ENCODE measurements at regions of chr19 and their contacts with region 1.

Region 1: DNA sequence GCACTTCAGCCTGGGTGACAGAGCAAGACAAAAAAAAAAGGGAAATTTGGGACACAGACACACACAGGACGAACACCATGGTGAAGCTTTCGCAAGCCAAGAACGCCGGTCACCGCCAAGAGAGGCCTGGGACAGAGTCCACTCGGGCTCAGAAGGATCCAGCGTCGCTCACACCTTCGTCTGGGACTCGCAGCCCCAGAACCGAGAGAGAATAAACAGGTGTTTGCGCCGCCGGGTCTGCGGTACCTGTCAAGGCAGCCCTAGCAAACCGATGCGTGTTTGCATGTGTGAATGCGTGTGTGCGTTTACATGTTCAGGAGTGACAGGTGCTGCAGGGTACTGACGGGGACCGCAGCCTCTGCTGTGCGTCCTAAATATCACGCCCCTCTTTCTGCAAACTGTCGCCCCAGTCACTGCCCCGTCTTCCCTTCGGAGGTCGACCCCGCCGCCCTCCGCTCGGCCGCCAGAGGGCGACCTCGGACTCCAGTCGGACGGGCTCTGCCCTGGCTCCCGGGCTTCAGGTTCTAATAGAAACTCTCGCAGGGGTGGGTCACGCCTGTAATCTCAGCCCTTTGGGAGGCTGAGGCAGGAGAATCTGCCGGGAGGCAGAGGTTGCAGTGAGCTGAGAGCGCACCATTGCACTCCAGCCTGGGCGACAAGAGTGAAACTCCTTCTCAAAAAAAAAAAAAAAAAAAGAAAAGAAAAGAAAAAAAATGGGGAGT is 11.8 kb upstream of the CSNK1G2 start:
- DNase-seq: peak; percentile 84
- H3K4me3 Mint-ChIP-seq: peak overlapping the region; percentile 71
- H3K27ac Mint-ChIP-seq: peak overlapping the region; percentile 5
- H3K4me1 Mint-ChIP-seq: peaks cover 44% of the 10 kb centered on the region
- H3K27me3 Mint-ChIP-seq: peaks cover 36% of the 10 kb centered on the region

Region 2: DNA sequence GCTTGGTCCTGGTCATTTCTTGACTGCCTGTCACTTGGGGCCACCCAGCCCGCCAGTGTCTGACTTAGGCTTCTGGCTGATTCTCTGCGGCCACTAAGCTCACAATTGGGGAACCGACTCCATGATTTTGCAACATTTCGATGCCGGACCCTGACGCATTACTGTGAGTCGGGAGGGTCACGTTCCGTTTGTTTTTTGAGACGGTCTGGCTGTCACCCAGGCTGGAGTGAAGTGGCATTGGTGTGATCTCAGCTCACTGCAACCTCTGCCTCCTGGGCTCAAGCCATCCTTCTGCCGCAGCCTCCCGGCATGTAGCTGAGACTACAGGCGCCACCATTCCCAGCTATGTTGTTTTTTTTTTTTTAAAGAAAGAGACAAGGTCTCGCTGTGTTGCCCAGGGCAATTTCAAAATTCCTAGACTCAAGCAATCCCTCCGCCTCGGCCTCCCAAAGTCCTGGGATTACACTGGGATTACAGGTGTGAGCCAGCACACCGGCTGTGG is 27.2 kb before region 1 on chr19:
- CTCF ChIA-PET with region 1: interaction called, 10 read pairs
- DNase-seq: no peak
- H3K4me3 Mint-ChIP-seq: no peak overlapping the region
- H3K27ac Mint-ChIP-seq: peak overlapping the region; percentile 14
- H3K4me1 Mint-ChIP-seq: peaks cover 59% of the 10 kb centered on the region
- H3K27me3 Mint-ChIP-seq: no peaks in the 10 kb centered on the region

Region 3: GRCh38 chr19:1917146-1917545 is 12.0 kb before region 1 on chr19:
- CTCF ChIA-PET with region 1: no interaction called
- DNase-seq: no peak
- H3K4me3 Mint-ChIP-seq: no peak overlapping the region
- H3K27ac Mint-ChIP-seq: no peak overlapping the region
- H3K4me1 Mint-ChIP-seq: peaks cover 12% of the 10 kb centered on the region
- H3K27me3 Mint-ChIP-seq: no peaks in the 10 kb centered on the region

Region 4: DNA sequence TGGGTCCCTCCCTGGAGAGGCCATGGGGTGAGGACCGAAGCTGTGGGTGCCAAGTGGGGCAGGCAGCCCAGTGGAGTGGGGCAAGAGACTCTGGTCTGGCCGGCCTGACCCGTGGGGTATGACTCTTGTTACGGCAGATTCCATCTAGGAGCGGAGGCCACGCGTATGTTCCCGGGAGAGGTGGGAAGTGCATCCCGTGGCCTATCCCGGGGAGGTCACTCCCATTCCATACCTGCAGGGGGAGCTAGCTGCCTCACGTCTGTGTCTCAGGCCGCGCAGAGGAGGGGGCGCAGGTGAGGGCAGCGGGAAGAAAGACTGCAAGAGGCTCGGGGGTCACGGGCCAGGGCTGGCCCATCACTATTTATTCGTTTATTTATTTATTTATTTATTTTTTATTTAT is 16.7 kb after region 1 on chr19:
- CTCF ChIA-PET with region 1: interaction called, 10 read pairs
- DNase-seq: peak; percentile 57
- H3K4me3 Mint-ChIP-seq: no peak overlapping the region
- H3K27ac Mint-ChIP-seq: peak overlapping the region; percentile 34
- H3K4me1 Mint-ChIP-seq: peaks cover 43% of the 10 kb centered on the region
- H3K27me3 Mint-ChIP-seq: no peaks in the 10 kb centered on the region